ENCODE measurements at regions of chr11 and their contacts with region 1.

Region 1: GRCh38 chr11:121473064-121473777 is 20.5 kb upstream of the SORL1-AS1 start:
- DNase-seq: no peak
- CTCF ChIP-seq: no peak

Region 2: GRCh38 chr11:121352251-121352891 is 120.8 kb before region 1 on chr11:
- CTCF ChIA-PET with region 1: no interaction called
- POLR2A ChIA-PET with region 1: no interaction called
- DNase-seq: no peak
- CTCF ChIP-seq: no peak

Region 3: GRCh38 chr11:121426476-121427399 is 46.5 kb before region 1 on chr11:
- CTCF ChIA-PET with region 1: no interaction called
- POLR2A ChIA-PET with region 1: no interaction called
- DNase-seq: peak; percentile 68
- CTCF ChIP-seq: peak; percentile 37

Region 4: DNA sequence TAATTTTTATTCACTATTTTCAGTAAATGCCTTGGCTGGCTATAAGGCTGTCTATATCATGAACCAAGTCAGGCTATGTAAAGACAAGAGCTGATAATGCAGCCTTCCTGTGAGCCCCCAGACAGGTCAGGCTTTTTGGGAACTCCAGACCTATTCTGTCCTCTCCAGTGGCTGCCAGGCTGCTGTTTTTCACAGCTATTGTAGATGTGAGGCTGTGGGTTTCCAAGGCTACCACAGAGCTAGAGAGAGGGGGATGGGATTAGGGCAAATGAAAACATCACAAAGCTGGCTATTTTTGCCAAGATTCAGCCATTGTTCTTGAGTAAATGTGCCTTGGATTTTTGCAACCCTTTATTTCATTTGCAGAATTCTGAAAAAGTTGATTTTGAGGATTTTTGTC is 35.2 kb after region 1 on chr11:
- CTCF ChIA-PET with region 1: interaction called, 11 read pairs
- POLR2A ChIA-PET with region 1: no interaction called
- DNase-seq: no peak
- CTCF ChIP-seq: no peak

Region 5: DNA sequence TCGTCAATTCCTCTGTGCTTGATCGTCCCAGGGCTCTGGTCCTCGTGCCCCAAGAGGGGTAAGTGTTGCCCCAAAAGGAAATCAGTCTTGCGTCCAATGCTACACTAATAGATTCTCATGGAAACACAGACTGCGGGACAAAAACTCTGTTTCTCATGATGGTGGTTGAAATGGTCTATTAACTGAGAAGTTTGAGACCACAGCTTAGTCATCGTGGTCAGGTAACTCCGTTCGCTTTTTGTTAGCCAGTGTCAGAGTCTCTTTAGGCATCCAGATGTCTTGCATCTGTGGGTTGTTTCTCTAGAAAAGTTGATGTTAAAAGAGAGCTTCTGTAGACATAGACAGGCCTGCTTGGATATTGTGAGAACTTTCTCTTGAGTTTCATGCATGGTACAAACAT is 84.1 kb after region 1 on chr11:
- CTCF ChIA-PET with region 1: no interaction called
- POLR2A ChIA-PET with region 1: no interaction called
- DNase-seq: peak; percentile 46
- CTCF ChIP-seq: no peak